Transverse colon (tissue), 4 donors: ENCODE measurements at regions of chr15 and their contacts with region 1.

Region 1: GRCh38 chr15:64731012-64731806 is 44.2 kb downstream of the RBPMS2 start:
- DNase-seq: peak; percentile 91
- H3K4me3 ChIP-seq: no peak overlapping the region
- H3K27ac ChIP-seq: peak overlapping the region in 2 of 4 donors; percentile 11 to 34
- H3K4me1 ChIP-seq: peaks cover 0 to 7% (median 2%) of the 10 kb centered on the region in 4 donors
- H3K27me3 ChIP-seq: peaks cover 4% of the 10 kb centered on the region
- CTCF ChIP-seq: peak; percentile 86 to 96 (median 90)
- EP300 ChIP-seq: no peak
- POLR2A ChIP-seq: no peak

Region 2: GRCh38 chr15:64681424-64682024 is 49.7 kb before region 1 on chr15:
- in situ Hi-C with region 1: loop called in 2 of 4 experiments (anchors 5 kb)
- intact Hi-C with region 1: loop called (anchors 1 kb)
- DNase-seq: peak; percentile 32
- H3K4me3 ChIP-seq: no peak overlapping the region
- H3K27ac ChIP-seq: no peak overlapping the region
- H3K4me1 ChIP-seq: peaks cover 0 to 3% (median 0%) of the 10 kb centered on the region in 4 donors
- H3K27me3 ChIP-seq: no peaks in the 10 kb centered on the region
- CTCF ChIP-seq: peak; percentile 50 to 85 (median 69)
- EP300 ChIP-seq: no peak
- POLR2A ChIP-seq: no peak

Region 3: DNA sequence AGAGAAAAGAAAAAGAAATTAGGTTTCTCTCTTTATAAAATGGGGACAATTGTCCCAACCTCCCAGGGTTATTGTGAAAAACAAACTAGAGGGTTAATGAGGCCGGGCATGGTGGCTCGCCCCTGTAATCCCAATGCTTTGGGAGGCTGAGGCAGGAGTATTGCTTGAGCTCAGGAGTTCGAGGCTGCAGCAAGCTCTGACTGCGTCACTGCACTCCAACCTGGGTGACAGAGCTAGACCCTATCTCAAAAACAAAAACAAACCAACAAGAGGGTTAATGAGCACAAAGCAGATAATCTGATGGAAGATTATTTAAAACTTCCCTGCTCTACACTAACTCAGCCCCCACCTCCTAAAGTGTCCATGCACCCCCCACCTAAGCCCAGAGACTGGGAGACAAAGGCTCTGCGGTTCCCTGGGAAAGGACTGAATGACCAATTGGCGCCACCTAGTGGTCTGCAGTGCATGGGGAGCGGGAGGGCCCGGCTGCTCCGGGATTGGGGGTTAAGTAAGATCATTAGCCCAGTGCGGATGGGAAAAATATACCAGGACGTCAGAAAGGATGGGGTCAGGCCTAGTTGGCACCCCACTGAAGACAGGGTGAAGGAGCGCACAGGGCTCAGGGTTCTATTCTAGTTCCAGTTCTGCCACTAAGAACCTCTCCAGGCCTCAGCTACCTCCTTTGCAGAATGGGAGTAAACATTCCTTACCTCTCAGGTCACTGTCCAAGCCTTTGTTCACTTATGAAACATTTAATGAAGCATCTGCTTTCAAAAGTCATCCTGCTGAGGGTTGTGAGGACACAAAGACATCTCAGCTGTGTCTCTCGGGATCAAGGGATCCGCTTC is 78.7 kb after region 1 on chr15:
- in situ Hi-C with region 1: loop called in 3 of 4 experiments (anchors 5 to 10 kb)
- intact Hi-C with region 1: no loop called
- DNase-seq: peak; percentile 83
- H3K4me3 ChIP-seq: no peak overlapping the region
- H3K27ac ChIP-seq: peak overlapping the region; percentile 68 to 90 (median 74)
- H3K4me1 ChIP-seq: peaks cover 0 to 12% (median 6%) of the 10 kb centered on the region in 4 donors
- H3K27me3 ChIP-seq: no peaks in the 10 kb centered on the region
- CTCF ChIP-seq: peak; percentile 85 to 94 (median 92)
- EP300 ChIP-seq: no peak
- POLR2A ChIP-seq: no peak